B cell (primary cell): ENCODE measurements at regions of chrX and their contacts with region 1.

Region 1: DNA sequence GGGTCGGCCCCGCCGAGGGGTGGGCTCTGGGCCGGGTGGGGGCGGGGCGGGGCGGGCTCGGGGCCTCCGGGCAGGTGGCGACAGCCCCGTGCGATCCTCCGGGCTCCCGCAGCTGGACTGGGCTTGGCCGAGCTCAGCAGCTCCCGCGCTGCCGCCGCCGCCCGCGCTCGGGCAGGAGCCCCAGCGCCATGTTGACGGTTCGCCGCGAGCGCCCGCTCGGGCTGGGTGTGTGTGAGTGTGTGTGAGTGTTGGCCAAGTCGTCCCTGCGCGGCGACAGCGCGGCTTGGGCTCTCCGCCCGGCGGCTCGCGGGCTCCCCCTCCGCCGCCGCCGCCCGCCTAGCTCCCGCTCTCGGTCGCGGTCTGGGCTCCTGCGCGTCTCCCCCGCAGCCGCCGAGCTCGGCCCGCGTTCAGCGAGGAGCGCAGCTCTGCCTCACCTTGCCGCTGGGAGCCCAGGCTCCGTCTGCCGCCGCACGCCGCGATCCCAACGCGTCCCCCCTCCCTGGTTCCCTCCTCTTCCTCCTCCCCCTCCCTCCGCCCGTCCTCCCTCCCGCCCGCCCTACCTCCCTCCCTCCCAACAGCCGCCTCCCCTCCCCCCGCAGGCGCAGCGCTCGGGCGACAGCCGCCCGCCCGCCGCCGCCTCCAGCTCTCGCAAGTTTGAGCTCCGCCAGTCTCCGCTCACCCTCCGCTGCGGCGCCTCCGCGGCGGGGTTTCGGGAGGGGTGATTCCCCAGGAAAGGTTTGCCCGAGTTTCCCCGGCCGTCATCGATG is at the start of gene BCOR:
- DNase-seq: peak; percentile 83
- ATAC-seq: peak; percentile 29
- H3K4me3 ChIP-seq: peak within 1 kb of the TSS in 4 of 5 experiments; percentile 58 to 81 (median 62)
- H3K4me3 Mint-ChIP-seq: peak within 1 kb of the TSS; percentile 93
- H3K27ac ChIP-seq: peak within 1 kb of the TSS; percentile 73 to 89
- H3K27ac Mint-ChIP-seq: peak within 1 kb of the TSS; percentile 95
- H3K4me1 ChIP-seq: peaks cover 35 to 40% of the 10 kb centered on the region in 2 donors
- H3K4me1 Mint-ChIP-seq: peaks cover 35% of the 10 kb centered on the region
- H3K27me3 ChIP-seq: peaks cover 0 to 2% (median 0%) of the 10 kb centered on the region in 4 experiments
- H3K27me3 Mint-ChIP-seq: no peaks in the 10 kb centered on the region
- CTCF ChIP-seq: no peak
- total RNA-seq, gene BCOR: 65.3 and 66.1 TPM in 2 replicates

Region 2: DNA sequence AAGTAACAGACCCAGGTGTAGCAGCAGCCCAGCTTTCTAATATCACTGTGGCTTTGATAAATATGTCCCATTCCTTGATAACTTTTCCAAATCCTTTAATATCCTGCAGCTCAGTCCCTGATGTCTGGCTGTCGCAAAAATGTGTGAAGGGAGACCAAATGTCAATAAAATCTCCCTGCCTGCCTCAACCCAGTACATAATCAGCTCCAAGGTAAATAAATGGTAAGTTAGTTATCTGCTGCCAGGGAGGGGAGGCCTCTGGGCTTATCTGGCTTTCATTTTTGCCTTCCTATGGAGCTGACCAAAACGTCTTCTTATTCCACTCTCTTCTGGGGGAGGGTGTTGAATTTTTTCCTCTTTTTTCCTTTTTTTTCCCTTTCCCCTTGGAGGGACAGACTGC is 665.8 kb before region 1 on chrX:
- CTCF ChIA-PET with region 1: no interaction called
- POLR2A ChIA-PET with region 1: no interaction called
- intact Hi-C with region 1: no loop called
- DNase-seq: no peak
- ATAC-seq: no peak
- H3K4me3 ChIP-seq: no peak overlapping the region
- H3K4me3 Mint-ChIP-seq: no peak overlapping the region
- H3K27ac ChIP-seq: no peak overlapping the region
- H3K27ac Mint-ChIP-seq: no peak overlapping the region
- H3K4me1 ChIP-seq: peaks cover 7 to 11% of the 10 kb centered on the region in 2 donors
- H3K4me1 Mint-ChIP-seq: peaks cover 16% of the 10 kb centered on the region
- H3K27me3 ChIP-seq: no peaks in the 10 kb centered on the region
- H3K27me3 Mint-ChIP-seq: no peaks in the 10 kb centered on the region
- CTCF ChIP-seq: no peak

Region 3: DNA sequence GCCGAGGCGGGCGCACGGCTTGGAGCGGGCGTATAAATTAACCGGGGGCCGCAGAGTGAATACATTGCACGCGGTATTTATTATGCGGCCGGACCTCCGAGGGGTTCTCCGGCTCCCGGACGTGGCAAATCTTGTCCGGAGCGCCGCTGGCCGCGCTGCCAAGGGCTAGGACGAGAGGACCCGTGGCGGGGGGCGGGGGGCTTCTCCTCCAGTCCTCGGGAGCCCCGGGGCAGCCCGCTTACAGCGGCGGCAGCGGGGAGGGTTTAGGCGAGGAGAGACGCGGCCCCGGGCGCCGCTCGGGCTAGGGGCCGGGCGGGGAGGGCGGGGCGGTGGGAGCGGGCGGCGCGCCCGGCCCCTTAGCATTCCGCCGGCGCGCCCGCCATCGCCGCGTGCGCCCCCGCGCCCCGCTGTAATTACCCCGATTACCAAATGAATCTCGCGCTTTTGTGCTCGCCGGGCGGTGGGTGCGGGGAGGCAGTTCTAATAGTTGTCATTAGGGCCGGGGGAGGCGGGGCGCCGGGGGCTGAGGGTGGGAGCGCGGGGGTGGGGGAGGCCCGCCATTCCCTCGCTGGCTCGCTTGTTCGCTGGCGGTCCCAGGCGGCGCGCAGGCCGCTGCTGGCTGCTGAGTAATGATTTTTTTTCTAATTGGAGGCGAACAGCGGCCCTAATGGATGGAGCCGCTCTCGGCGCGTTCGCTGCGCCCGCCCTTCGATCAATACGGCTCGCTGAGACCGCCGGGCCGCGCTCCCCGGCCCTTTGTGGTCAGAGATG is 276.6 kb before region 1 on chrX:
- CTCF ChIA-PET with region 1: interaction called, 3 read pairs
- POLR2A ChIA-PET with region 1: no interaction called
- intact Hi-C with region 1: loop called (anchors 10 kb)
- DNase-seq: no peak
- ATAC-seq: no peak
- H3K4me3 ChIP-seq: no peak overlapping the region
- H3K4me3 Mint-ChIP-seq: peak overlapping the region; percentile 41
- H3K27ac ChIP-seq: no peak overlapping the region
- H3K27ac Mint-ChIP-seq: no peak overlapping the region
- H3K4me1 ChIP-seq: peaks cover 7 to 9% of the 10 kb centered on the region in 2 donors
- H3K4me1 Mint-ChIP-seq: peaks cover 15% of the 10 kb centered on the region
- H3K27me3 ChIP-seq: peaks cover 0 to 48% (median 12%) of the 10 kb centered on the region in 4 experiments
- H3K27me3 Mint-ChIP-seq: peaks cover 45% of the 10 kb centered on the region
- CTCF ChIP-seq: no peak

Region 4: DNA sequence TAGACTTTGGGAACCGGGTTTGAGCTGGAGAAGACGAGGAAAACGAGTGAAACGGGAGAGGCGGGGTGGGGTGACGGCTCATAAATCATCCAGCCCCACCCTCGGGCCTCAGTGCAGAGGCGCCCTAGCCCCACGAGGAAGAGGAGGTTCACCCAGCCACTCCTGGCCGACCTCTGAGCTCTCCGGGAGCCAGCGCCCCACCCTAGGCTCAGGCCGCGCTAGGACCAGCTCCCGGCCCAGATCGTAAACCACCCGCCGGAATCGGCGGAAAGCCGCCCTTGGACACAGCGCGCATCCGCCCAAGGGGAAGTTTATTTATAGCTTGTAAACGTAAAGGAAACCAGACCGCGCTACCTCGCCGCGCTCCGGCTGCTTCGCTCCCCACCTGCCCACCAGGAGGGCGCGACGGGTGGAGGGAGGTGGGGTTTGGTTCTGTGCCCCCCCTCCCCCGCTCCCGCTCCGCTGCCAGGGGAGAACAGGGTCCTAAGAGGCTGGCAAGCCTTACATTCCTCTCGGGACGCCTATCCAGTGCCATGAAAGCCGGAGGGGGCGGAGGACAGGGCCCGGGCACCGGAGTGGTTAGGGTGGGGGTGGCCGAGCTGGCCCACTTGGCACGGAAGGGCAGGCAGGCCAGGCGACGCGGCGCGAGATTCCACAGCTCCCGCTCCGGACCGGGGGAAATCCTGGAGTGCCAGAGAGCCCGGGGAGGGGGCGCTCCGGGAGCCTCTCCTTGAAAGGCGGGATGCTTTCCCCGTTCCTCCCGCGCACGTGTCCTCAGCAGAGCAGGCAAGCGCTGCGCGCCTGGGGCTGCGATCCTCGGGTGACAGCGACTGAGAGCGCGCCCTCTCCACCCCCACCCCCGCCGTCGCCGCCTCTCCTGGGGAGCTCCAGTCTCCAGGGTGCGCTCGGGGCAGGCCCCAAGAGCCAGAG is 84.1 kb before region 1 on chrX:
- CTCF ChIA-PET with region 1: interaction called, 5 read pairs
- POLR2A ChIA-PET with region 1: interaction called, 18 read pairs
- intact Hi-C with region 1: loop called (anchors 5 kb)
- DNase-seq: peak; percentile 80
- ATAC-seq: peak; percentile 55
- H3K4me3 ChIP-seq: peak overlapping the region in 4 of 5 experiments; percentile 53 to 69 (median 56)
- H3K4me3 Mint-ChIP-seq: peak overlapping the region; percentile 85
- H3K27ac ChIP-seq: peak overlapping the region in 1 of 2 donors; percentile 36
- H3K27ac Mint-ChIP-seq: peak overlapping the region; percentile 71
- H3K4me1 ChIP-seq: peaks cover 43 to 52% of the 10 kb centered on the region in 2 donors
- H3K4me1 Mint-ChIP-seq: peaks cover 34% of the 10 kb centered on the region
- H3K27me3 ChIP-seq: peaks cover 0 to 10% (median under 1%) of the 10 kb centered on the region in 4 experiments
- H3K27me3 Mint-ChIP-seq: peaks cover 2% of the 10 kb centered on the region
- CTCF ChIP-seq: no peak

Region 5: GRCh38 chrX:40058719-40059118 is 39.0 kb before region 1 on chrX:
- CTCF ChIA-PET with region 1: no interaction called
- POLR2A ChIA-PET with region 1: no interaction called
- intact Hi-C with region 1: no loop called
- DNase-seq: no peak
- ATAC-seq: no peak
- H3K4me3 ChIP-seq: no peak overlapping the region
- H3K4me3 Mint-ChIP-seq: no peak overlapping the region
- H3K27ac ChIP-seq: no peak overlapping the region
- H3K27ac Mint-ChIP-seq: no peak overlapping the region
- H3K4me1 ChIP-seq: no peaks in the 10 kb centered on the region
- H3K4me1 Mint-ChIP-seq: no peaks in the 10 kb centered on the region
- H3K27me3 ChIP-seq: no peaks in the 10 kb centered on the region
- H3K27me3 Mint-ChIP-seq: no peaks in the 10 kb centered on the region
- CTCF ChIP-seq: no peak

Region 6: GRCh38 chrX:40117715-40118285 is 20.1 kb after region 1 on chrX:
- CTCF ChIA-PET with region 1: no interaction called
- POLR2A ChIA-PET with region 1: no interaction called
- intact Hi-C with region 1: no loop called
- DNase-seq: no peak
- ATAC-seq: no peak
- H3K4me3 ChIP-seq: no peak overlapping the region
- H3K4me3 Mint-ChIP-seq: no peak overlapping the region
- H3K27ac ChIP-seq: no peak overlapping the region
- H3K27ac Mint-ChIP-seq: no peak overlapping the region
- H3K4me1 ChIP-seq: peaks cover 8 to 11% of the 10 kb centered on the region in 2 donors
- H3K4me1 Mint-ChIP-seq: peaks cover 9% of the 10 kb centered on the region
- H3K27me3 ChIP-seq: no peaks in the 10 kb centered on the region
- H3K27me3 Mint-ChIP-seq: no peaks in the 10 kb centered on the region
- CTCF ChIP-seq: no peak

Region 7: DNA sequence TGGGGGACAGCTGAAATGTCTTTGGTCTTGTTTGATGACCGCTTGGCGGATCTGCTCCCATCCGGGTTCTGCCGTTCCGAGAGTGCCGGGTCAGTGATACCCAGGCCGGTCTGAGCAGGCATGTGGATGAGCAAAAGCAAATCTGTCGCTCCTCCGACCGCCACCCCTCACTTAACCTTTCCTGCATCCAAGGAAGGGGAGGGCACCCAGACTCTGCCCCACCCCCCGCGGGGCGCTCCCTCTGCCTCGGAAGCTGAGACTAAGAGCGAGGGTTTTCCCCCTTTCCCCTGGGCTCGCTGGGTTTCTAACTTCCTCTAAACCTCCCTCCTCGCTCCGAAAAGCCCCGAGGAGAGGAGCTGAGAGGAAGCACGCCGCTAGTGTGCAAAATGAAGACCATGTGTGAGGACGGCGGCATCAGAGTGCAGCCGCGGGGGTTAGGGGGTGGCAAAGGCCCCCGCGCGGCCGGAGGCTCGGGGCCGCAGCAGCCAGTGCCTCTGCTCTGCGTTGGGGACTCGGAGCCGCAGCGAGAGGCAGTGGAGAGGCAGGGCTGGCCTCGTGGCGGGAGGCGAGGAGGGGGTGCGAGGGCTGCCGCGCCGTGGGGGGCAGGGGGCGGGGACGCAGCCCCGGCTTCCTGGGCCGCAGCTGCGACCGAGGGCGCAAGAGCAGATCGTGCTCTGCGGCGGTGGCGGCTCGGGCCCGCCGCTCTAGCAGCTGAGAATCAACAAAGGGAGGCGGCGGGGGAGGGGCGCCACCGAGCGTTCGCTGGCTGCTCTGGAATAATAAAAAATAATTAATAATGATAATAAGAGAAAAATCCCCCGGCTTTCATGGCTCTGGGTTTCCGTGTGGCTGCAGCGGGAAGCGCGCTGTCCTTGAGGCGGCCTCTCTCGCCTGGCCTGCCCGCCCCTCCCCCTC is 55.9 kb after region 1 on chrX:
- CTCF ChIA-PET with region 1: interaction called, 13 read pairs
- POLR2A ChIA-PET with region 1: interaction called, 46 read pairs
- intact Hi-C with region 1: loop called (anchors 2 kb)
- DNase-seq: peak; percentile 87
- ATAC-seq: peak; percentile 71
- H3K4me3 ChIP-seq: peak overlapping the region in 4 of 5 experiments; percentile 46 to 59 (median 54)
- H3K4me3 Mint-ChIP-seq: peak overlapping the region; percentile 89
- H3K27ac ChIP-seq: peak overlapping the region; percentile 9 to 50
- H3K27ac Mint-ChIP-seq: peak overlapping the region; percentile 88
- H3K4me1 ChIP-seq: peaks cover 41 to 63% of the 10 kb centered on the region in 2 donors
- H3K4me1 Mint-ChIP-seq: peaks cover 46% of the 10 kb centered on the region
- H3K27me3 ChIP-seq: no peaks in the 10 kb centered on the region
- H3K27me3 Mint-ChIP-seq: peaks cover 3% of the 10 kb centered on the region
- CTCF ChIP-seq: no peak

Region 8: DNA sequence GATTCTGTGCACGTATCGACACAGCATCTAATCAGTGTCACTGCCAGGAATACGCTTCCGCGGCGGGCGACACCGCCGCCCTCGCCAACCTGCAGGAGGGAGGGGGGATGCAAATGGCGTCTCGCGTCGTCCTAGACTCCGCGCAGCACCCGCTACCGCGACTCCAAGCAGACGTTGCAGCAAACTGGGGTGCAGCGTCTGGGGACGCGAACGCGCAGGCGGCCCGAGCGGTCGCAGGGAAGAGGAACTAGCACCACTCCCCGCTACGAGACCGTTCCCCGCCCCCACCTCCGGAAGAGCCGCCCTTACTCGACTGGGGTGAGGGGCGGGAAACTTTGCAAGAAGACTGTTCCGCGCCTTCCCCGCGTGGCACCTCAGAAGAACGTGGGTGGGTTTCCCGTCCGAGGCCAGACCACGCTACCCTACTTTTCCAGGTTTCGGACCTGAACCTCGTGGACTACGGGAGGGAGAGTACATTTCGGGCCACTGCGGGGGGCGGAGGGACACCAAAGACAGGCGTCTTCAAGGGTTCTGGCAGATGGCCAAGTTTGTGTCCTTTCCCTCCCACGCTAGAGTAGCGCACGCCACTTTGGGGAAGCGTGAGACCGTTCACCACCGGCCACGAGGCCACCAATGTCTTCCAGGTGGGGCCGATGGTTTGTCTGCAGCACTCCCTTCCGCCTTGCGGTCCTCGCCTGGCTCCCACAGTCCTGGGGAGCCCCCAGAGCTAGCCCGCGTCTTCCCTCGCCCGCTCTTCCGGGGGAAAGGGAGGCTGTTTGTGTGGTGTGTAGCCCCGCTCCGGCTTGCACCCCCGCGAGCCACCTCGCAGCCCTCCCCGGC is 78.1 kb after region 1 on chrX:
- CTCF ChIA-PET with region 1: interaction called, 50 read pairs
- POLR2A ChIA-PET with region 1: interaction called, 102 read pairs
- intact Hi-C with region 1: loop called (anchors 1 kb)
- DNase-seq: peak; percentile 93
- ATAC-seq: peak; percentile 53
- H3K4me3 ChIP-seq: peak overlapping the region; percentile 38 to 72 (median 60)
- H3K4me3 Mint-ChIP-seq: peak overlapping the region; percentile 89
- H3K27ac ChIP-seq: peak overlapping the region; percentile 97 to 99
- H3K27ac Mint-ChIP-seq: peak overlapping the region; percentile 100
- H3K4me1 ChIP-seq: peaks cover 37 to 51% of the 10 kb centered on the region in 2 donors
- H3K4me1 Mint-ChIP-seq: peaks cover 48% of the 10 kb centered on the region
- H3K27me3 ChIP-seq: no peaks in the 10 kb centered on the region
- H3K27me3 Mint-ChIP-seq: no peaks in the 10 kb centered on the region
- CTCF ChIP-seq: no peak

Region 9: DNA sequence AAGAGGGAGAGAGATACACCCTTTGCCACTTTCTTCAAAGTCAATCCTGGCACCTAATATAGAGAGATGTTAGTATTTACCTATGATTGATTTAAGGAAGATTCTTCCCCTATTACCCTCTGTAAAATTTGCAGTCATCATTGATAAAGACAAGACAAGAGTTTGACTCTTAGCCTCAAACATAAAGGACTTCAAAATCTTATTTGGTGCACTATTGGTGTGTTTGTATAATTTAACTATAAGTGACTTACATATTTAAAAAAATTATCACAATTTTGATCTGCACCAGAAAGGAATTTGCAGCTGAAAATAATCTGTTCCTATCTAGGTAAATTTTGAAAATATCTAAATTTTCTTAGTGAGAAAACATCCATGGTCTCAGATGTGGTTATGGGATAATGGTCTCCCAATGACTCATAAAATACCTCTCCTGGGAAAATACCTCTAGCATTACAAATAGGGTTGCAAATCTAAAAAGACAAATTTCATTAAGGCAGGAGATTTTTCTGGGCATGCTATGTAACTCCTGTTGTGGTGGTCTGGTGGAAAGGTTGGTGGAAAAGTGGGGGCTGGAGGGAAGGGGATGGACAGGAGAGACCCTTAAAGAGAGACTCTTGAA is 811.3 kb after region 1 on chrX:
- CTCF ChIA-PET with region 1: no interaction called
- POLR2A ChIA-PET with region 1: no interaction called
- intact Hi-C with region 1: no loop called
- DNase-seq: no peak
- ATAC-seq: no peak
- H3K4me3 ChIP-seq: no peak overlapping the region
- H3K4me3 Mint-ChIP-seq: no peak overlapping the region
- H3K27ac ChIP-seq: no peak overlapping the region
- H3K27ac Mint-ChIP-seq: no peak overlapping the region
- H3K4me1 ChIP-seq: no peaks in the 10 kb centered on the region
- H3K4me1 Mint-ChIP-seq: no peaks in the 10 kb centered on the region
- H3K27me3 ChIP-seq: no peaks in the 10 kb centered on the region
- H3K27me3 Mint-ChIP-seq: no peaks in the 10 kb centered on the region
- CTCF ChIP-seq: no peak